GM12878 (cell line): ENCODE measurements at regions of chrX and their contacts with region 1.

Region 1: DNA sequence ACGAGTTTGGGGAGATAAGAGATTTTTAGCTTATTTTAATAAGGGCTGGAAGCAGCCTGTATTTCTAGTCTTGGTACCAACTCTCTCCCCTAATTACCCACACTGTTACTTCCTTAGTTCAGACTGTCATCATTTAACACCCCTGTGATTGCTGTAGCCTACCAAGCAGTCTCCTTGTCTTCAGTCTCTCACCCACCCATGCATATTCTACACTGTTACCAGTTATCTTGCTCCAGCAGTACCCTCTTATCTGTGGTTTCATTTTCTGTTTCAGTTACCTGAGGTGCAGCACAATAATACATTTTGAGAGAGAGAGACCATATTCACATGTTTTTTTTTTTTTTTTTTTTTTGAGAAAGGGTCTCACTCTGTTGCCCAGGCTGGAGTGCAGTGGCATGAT is 80.2 kb downstream of the DIAPH2 start:
- DNase-seq: no peak
- ATAC-seq: peak; percentile 84
- H3K4me3 ChIP-seq: no peak overlapping the region
- H3K27ac ChIP-seq: no peak overlapping the region
- H3K4me1 ChIP-seq: peaks cover 3% of the 10 kb centered on the region
- H3K27me3 ChIP-seq: no peaks in the 10 kb centered on the region
- CTCF ChIP-seq: no peak
- EP300 ChIP-seq: no peak
- POLR2A ChIP-seq: no peak
- RAD21 ChIP-seq: no peak

Region 2: DNA sequence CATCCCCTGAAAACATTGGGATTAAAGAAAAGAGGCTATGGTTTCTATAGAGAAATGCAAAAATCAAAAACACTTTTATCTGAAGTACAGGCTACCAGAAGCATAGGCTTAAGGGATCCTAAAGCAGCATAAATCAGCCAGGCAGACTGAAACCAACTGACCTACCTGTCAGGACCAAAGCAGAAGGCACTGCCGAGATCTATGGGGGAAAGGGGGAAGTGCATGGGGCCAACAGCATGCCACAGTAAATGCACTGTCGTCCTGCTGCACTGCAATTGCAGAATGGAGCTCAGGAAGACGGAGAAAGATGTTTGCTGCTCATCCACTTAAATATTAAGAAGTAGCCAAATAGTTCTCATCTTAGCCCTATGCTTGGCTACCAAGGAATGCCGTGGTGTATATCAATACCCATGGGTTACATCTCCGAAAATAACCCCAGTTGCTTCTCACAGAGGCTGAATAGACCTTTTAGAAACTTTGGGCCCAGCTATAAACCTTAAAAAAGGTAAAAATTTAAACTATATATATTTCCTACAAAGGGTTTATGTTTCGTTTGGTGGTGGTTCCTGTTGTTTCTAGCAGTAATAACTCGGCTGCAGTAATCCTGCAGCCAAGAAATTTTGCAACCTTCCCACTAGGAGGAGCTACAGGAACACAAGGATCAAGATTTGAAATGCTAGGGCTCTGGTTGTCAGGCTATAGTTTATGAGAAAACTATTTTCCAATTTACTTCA is 392.4 kb before region 1 on chrX:
- CTCF ChIA-PET with region 1: no interaction called
- POLR2A ChIA-PET with region 1: no interaction called
- RAD21 ChIA-PET with region 1: no interaction called
- SMC1A ChIA-PET with region 1: interaction called, 3 read pairs
- in situ Hi-C with region 1: no loop called
- intact Hi-C with region 1: loop called (anchors 10 kb)
- DNase-seq: no peak
- ATAC-seq: peak; percentile 77
- H3K4me3 ChIP-seq: no peak overlapping the region
- H3K27ac ChIP-seq: no peak overlapping the region
- H3K4me1 ChIP-seq: no peaks in the 10 kb centered on the region
- H3K27me3 ChIP-seq: no peaks in the 10 kb centered on the region
- CTCF ChIP-seq: peak; percentile 48 to 57 (median 54)
- EP300 ChIP-seq: no peak
- POLR2A ChIP-seq: no peak
- RAD21 ChIP-seq: peak; percentile 69

Region 3: DNA sequence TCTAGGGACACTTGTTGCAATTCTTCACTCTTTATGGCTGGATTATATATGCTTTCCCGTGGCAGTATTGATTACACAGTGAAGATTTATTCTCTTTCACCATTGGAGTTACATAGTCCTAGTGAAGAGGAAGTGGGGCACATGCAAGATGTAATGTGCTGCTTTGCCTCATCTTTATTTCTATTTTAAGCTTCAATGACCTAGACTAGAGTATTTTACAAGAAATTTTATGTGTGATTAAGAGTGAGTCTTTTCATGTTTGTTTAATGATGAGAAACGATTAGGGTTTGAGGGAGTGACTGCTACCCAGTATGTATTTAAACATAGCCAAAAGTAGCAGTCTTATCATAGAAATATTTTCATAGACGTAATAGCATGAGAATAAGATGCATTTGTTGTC is 49.4 kb before region 1 on chrX:
- CTCF ChIA-PET with region 1: no interaction called
- POLR2A ChIA-PET with region 1: no interaction called
- RAD21 ChIA-PET with region 1: no interaction called
- SMC1A ChIA-PET with region 1: no interaction called
- in situ Hi-C with region 1: no loop called
- intact Hi-C with region 1: no loop called
- DNase-seq: no peak
- ATAC-seq: no peak
- H3K4me3 ChIP-seq: no peak overlapping the region
- H3K27ac ChIP-seq: no peak overlapping the region
- H3K4me1 ChIP-seq: no peaks in the 10 kb centered on the region
- H3K27me3 ChIP-seq: no peaks in the 10 kb centered on the region
- CTCF ChIP-seq: no peak
- EP300 ChIP-seq: no peak
- POLR2A ChIP-seq: no peak
- RAD21 ChIP-seq: no peak